Esophagus muscularis mucosa (tissue), 4 donors: ENCODE measurements at regions of chr6 and their contacts with region 1.

Region 1: DNA sequence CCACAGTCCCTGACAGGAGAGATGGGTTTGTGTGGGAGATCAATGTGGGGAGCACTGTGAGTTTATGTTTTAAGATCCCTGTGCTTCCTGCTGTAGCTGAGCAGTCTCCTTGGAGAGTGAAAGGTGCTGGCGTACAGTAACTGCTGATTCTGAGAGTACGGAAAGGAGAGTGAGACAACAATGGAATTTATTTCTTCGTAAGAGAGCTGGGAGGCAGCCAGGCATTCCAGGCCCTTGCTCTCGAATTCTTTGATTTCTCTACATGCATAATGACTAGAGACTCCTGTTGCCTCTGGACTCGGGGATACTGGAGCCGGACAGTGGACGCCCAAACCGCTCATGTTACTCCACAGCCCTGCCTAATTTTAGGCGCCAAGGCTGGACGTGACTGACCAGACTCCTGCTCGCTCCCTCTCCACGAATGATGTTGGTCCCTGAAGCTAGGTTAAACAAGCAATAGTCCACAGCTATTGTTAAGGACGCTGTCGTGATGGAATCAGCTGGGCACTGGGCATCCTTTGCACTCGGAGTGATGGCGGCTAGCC is 131.0 kb upstream of the PHACTR1 start:
- DNase-seq: no peak
- H3K4me3 ChIP-seq: peak overlapping the region in 2 of 4 donors; percentile 5 to 7
- H3K27ac ChIP-seq: peak overlapping the region; percentile 32 to 69 (median 53)
- H3K4me1 ChIP-seq: peaks cover 7 to 11% (median 10%) of the 10 kb centered on the region in 4 donors
- H3K27me3 ChIP-seq: no peaks in the 10 kb centered on the region
- CTCF ChIP-seq: no peak
- EP300 ChIP-seq: no peak
- POLR2A ChIP-seq: no peak

Region 2: DNA sequence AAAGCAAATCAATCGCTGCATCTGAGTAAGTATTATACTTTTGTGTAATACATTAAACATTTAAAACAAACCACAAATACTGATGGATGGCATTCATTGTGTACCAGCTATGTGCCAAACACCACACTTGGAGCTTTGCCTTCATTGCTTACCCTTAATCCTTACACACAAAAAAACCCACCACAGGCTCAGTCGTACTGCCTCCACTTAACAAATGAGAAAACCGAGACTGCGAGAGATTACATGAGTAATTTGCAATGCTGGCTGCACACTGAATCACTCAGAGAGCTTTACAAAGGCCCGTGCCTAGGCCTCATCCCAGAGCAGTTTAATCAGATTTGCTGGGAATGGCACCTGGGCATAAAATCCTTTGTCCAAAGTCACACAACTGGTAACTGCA is 164.9 kb before region 1 on chr6:
- intact Hi-C with region 1: loop called (anchors 10 kb)
- DNase-seq: no peak
- H3K4me3 ChIP-seq: no peak overlapping the region
- H3K27ac ChIP-seq: peak overlapping the region in 2 of 4 donors; percentile 2 to 30
- H3K4me1 ChIP-seq: peaks cover 11 to 46% (median 26%) of the 10 kb centered on the region in 4 donors
- H3K27me3 ChIP-seq: no peaks in the 10 kb centered on the region
- CTCF ChIP-seq: no peak
- EP300 ChIP-seq: no peak
- POLR2A ChIP-seq: no peak

Region 3: DNA sequence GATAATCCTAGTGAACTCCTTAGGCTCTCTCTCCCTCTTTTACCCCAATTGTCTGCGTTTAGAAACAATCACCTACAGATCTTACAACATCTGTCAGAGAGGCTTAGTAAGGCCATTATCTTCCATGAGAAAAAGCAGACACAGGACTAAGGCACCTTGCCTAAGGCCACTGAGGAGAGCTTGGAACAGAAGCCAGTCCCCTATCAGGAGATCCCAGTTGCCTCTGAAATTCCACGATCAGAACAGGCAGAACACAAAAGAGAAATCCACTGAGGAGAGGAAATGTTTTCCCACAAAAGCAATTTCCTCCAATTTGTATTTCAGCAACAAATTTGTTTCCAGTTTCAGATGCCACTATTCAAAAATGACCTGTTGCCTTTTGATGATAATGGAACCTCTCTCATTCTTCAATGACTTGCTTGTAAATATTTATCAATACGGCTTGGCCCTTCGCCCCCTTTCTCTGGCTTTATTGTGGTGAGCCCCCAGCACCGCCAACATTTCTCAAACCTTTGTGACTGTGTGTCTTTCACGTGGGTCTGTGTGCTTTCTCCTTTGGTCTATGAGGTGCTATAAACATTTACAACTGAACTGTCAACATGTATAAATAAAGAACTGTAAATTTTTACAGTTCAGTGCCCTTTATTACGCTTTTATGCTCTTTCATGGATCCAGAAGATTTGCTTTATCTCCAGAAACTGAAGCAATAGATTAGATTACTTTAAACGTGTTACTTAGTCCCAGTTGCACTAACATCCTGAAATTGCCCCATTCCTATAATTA is 56.8 kb before region 1 on chr6:
- intact Hi-C with region 1: no loop called
- DNase-seq: no peak
- H3K4me3 ChIP-seq: no peak overlapping the region
- H3K27ac ChIP-seq: peak overlapping the region in 3 of 4 donors; percentile 24 to 38 (median 30)
- H3K4me1 ChIP-seq: peaks cover 4 to 20% (median 13%) of the 10 kb centered on the region in 4 donors
- H3K27me3 ChIP-seq: no peaks in the 10 kb centered on the region
- CTCF ChIP-seq: no peak
- EP300 ChIP-seq: no peak
- POLR2A ChIP-seq: no peak

Region 4: DNA sequence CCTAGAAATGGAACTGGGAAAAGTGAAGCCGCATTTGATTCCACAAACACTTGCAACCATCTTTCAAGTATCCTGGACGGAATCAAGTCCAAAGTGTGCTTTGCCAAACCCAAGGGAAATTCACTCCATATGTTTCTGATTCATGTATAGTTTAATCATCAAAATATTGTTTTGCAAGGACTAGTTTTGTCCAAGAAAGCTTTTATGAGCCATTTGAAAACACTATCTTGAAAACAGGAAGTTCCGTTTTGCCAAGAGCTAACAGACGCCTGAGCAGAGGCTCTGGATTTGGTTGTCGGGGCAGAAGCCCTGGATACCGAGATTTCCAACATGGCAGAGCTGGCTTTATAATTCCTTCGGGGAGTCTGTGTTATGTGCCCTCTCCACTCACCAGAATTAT is 382.1 kb after region 1 on chr6:
- intact Hi-C with region 1: no loop called
- DNase-seq: no peak
- H3K4me3 ChIP-seq: no peak overlapping the region
- H3K27ac ChIP-seq: no peak overlapping the region
- H3K4me1 ChIP-seq: peaks cover 0 to 3% (median 0%) of the 10 kb centered on the region in 4 donors
- H3K27me3 ChIP-seq: no peaks in the 10 kb centered on the region
- CTCF ChIP-seq: no peak
- EP300 ChIP-seq: no peak
- POLR2A ChIP-seq: no peak